PC-9 (cell line): ENCODE measurements at regions of chr19 and their contacts with region 1.

Region 1: DNA sequence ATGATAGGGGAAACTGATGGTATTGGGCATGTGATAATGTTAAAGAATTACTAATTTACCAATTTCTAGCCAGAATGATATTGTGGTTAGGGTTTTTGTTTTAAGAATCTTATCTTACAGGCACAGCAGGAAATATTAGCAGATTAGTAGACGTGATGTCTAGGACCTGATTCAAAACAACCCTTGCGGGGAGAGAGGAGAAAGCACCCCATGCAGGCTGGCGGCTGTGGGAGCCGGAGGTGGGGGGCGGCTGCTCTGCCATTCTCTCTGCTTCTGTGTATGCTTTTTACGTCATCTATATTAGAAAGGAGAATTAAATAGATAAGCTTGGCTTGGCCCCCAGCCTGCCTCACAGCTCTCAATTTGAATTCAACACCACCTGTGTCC is 41.5 kb downstream of the MLLT1 start:
- DNase-seq: no peak
- H3K4me3 ChIP-seq: no peak overlapping the region
- H3K27ac ChIP-seq: no peak overlapping the region
- H3K4me1 ChIP-seq: peaks cover 11% of the 10 kb centered on the region
- H3K27me3 ChIP-seq: no peaks in the 10 kb centered on the region
- CTCF ChIP-seq: no peak

Region 2: DNA sequence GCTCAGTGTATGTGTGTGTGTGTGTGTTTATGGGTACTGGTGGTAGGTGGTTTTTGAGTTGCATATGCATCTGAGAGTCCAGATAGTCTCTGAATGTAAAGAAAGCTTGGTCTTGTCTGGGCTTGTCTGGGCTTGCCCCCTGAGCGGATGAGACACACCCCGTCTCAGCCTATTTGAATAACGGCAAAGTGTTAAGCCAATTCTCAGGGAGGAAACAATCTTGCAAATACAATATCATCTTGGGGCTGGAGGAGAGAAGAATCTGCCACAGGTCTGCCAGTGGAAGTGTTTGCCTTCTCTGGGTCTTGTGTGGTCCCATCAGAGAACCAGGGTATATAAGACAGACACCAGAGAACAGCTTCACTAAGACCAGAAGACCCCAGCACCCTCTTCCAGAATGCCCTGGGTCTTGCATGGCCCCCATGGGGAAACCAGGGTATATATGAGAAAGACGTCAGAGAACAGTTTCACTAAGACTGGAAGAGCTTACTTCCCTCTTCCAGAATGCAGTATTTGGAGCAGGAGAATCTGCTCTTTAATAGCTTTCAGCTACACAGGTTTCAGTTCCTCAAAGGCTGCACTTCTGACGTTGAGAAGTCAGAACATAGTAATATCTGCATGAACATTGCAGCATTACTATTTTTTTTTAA is 339.4 kb after region 1 on chr19:
- CTCF ChIA-PET with region 1: interaction called, 12 read pairs
- POLR2A ChIA-PET with region 1: no interaction called
- intact Hi-C with region 1: no loop called
- DNase-seq: no peak
- H3K4me3 ChIP-seq: no peak overlapping the region
- H3K27ac ChIP-seq: peak overlapping the region; percentile 41; the same call in 1 of the 2 replicates
- H3K4me1 ChIP-seq: peaks cover 34% of the 10 kb centered on the region
- H3K27me3 ChIP-seq: no peaks in the 10 kb centered on the region
- CTCF ChIP-seq: no peak